H1 (cell line): ENCODE measurements at regions of chr16 and their contacts with region 1.

Region 1: DNA sequence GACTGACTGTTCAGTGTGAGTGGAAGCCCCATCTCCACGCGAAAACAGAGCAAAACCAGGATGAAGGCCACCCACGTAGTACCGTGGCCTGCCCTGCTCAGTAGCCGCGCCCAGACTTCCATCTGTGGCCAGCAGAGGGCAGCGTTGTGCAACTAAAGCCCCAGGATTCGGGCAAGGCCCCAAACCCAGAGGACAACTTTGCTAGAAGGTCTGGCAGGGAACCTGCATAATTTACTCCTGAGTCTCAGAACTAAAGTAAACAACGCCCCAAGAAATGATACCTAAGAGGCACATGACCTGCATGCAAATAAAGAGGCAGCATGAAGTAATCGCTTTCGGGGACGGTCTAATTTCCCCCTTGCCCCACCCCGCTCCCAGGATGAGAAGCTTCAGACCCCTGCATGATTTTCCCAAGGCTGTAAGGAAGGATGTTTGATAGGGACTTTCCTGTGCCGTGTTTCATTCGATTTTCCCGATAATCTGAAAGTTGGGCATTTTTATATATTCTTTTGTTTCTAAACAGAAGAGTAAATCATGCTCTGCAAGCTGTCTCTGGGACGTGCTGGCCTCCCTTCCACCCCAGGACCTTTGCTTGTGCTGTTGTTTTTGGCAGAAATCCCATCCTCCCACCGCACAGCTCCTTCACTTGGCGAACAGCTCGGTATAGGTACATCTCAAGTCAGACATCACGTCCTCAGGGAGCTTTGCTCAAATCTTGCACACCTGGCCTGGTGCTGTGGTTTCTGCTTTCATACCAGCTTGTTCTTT is 18.6 kb downstream of the HSBP1 start:
- DNase-seq: peak in 1 of 2 experiments; percentile 97
- H3K4me3 ChIP-seq: no peak overlapping the region
- H3K27ac ChIP-seq: no peak overlapping the region; the same call in 1 of the 2 replicates
- H3K4me1 ChIP-seq: peaks cover 6 to 11% (median 8%) of the 10 kb centered on the region in 4 experiments
- H3K27me3 ChIP-seq: no peaks in the 10 kb centered on the region
- CTCF ChIP-seq: peak; percentile 90 to 97 (median 97)
- EP300 ChIP-seq: 0 out of 3 replicates have a peak, but pooled peaks of 1 of the 2 experiments have one; percentile 56
- POLR2A ChIP-seq: no peak
- RAD21 ChIP-seq: peak; percentile 99 to 100

Region 2: GRCh38 chr16:83674931-83675535 is 151.3 kb before region 1 on chr16:
- CTCF ChIA-PET with region 1: no interaction called
- POLR2A ChIA-PET with region 1: no interaction called
- DNase-seq: no peak
- H3K4me3 ChIP-seq: no peak overlapping the region
- H3K27ac ChIP-seq: no peak overlapping the region
- H3K4me1 ChIP-seq: no peaks in the 10 kb centered on the region
- H3K27me3 ChIP-seq: no peaks in the 10 kb centered on the region; a peak in 1 of 7 replicates
- CTCF ChIP-seq: no peak
- EP300 ChIP-seq: no peak
- POLR2A ChIP-seq: no peak
- RAD21 ChIP-seq: no peak

Region 3: GRCh38 chr16:83771306-83771942 is 54.9 kb before region 1 on chr16:
- CTCF ChIA-PET with region 1: no interaction called
- POLR2A ChIA-PET with region 1: no interaction called
- DNase-seq: no peak
- H3K4me3 ChIP-seq: no peak overlapping the region
- H3K27ac ChIP-seq: no peak overlapping the region
- H3K4me1 ChIP-seq: peaks cover 2 to 11% (median 6%) of the 10 kb centered on the region in 4 experiments; a peak in 5 of 7 replicates
- H3K27me3 ChIP-seq: no peaks in the 10 kb centered on the region
- CTCF ChIP-seq: no peak
- EP300 ChIP-seq: no peak
- POLR2A ChIP-seq: no peak
- RAD21 ChIP-seq: no peak

Region 4: DNA sequence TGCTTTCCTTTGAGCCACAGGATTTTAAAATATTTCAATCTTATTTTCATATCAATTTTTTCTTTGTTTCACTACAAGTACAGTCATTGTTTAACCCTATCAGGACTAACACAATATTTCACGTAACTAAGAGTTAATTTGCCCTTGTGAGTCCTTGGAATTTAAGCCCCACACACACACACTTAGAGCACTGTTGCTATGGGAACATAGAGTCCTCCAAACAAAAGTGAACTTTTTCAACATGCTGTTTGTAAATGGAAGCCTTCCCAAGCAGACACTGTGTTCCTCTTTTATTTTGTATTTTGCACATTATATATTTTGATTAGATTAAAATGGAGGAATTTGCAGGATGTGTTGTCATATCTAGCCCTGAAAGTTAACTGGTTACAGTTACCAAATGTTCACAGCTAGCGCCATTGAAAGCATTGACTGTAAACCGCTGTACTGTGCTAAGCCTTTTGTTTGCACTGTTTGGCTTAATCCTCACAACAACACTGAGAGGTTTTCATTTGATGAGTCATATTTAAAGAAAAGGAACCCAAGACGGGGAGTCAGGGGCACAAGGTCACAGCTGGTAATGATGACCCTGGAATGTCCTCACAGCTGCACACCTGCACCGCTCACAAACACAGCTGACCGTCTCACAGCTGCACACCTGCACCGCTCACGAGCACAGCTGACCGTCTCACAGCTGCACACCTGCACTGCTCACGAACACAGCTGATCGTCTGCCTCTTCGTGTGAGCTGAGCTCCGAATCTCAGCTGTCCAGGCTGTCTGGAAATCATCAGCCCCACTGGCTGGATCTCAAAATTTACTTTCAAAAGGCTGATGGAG is 12.3 kb before region 1 on chr16:
- CTCF ChIA-PET with region 1: interaction called, 21 read pairs
- POLR2A ChIA-PET with region 1: interaction called, 3 read pairs
- DNase-seq: peak in 1 of 2 experiments; percentile 26
- H3K4me3 ChIP-seq: no peak overlapping the region
- H3K27ac ChIP-seq: peak overlapping the region; percentile 65; the same call in 1 of the 2 replicates
- H3K4me1 ChIP-seq: peaks cover 1 to 19% (median 8%) of the 10 kb centered on the region in 4 experiments; a peak in 6 of 7 replicates
- H3K27me3 ChIP-seq: no peaks in the 10 kb centered on the region
- CTCF ChIP-seq: no peak
- EP300 ChIP-seq: no peak
- POLR2A ChIP-seq: no peak
- RAD21 ChIP-seq: no peak

Region 5: GRCh38 chr16:83842756-83843507 is 16.6 kb after region 1 on chr16:
- CTCF ChIA-PET with region 1: interaction called, 34 read pairs
- POLR2A ChIA-PET with region 1: interaction called, 54 read pairs
- DNase-seq: no peak
- H3K4me3 ChIP-seq: no peak overlapping the region
- H3K27ac ChIP-seq: 0 out of 2 replicates have a peak overlapping the region, but pooled peaks have one; percentile 6
- H3K4me1 ChIP-seq: peaks cover 15 to 30% (median 23%) of the 10 kb centered on the region in 4 experiments
- H3K27me3 ChIP-seq: no peaks in the 10 kb centered on the region
- CTCF ChIP-seq: no peak
- EP300 ChIP-seq: no peak
- POLR2A ChIP-seq: no peak
- RAD21 ChIP-seq: no peak

Region 6: GRCh38 chr16:83863682-83864081 is 37.4 kb after region 1 on chr16:
- CTCF ChIA-PET with region 1: interaction called, 18 read pairs
- POLR2A ChIA-PET with region 1: no interaction called
- DNase-seq: no peak
- H3K4me3 ChIP-seq: no peak overlapping the region
- H3K27ac ChIP-seq: no peak overlapping the region
- H3K4me1 ChIP-seq: peaks cover 0 to 8% (median 3%) of the 10 kb centered on the region in 4 experiments; a peak in 4 of 7 replicates
- H3K27me3 ChIP-seq: no peaks in the 10 kb centered on the region
- CTCF ChIP-seq: no peak
- EP300 ChIP-seq: no peak
- POLR2A ChIP-seq: no peak
- RAD21 ChIP-seq: no peak

Region 7: GRCh38 chr16:83878838-83879237 is 52.5 kb after region 1 on chr16:
- CTCF ChIA-PET with region 1: interaction called, 67 read pairs
- POLR2A ChIA-PET with region 1: no interaction called
- DNase-seq: no peak
- H3K4me3 ChIP-seq: no peak overlapping the region
- H3K27ac ChIP-seq: no peak overlapping the region
- H3K4me1 ChIP-seq: peaks cover 0 to 3% (median 0%) of the 10 kb centered on the region in 4 experiments; a peak in 1 of 7 replicates
- H3K27me3 ChIP-seq: no peaks in the 10 kb centered on the region
- CTCF ChIP-seq: peak in 2 of 3 experiments; percentile 46 to 65; a peak in 2 of 4 replicates
- EP300 ChIP-seq: no peak
- POLR2A ChIP-seq: no peak
- RAD21 ChIP-seq: peak; percentile 89 to 90

Region 8: DNA sequence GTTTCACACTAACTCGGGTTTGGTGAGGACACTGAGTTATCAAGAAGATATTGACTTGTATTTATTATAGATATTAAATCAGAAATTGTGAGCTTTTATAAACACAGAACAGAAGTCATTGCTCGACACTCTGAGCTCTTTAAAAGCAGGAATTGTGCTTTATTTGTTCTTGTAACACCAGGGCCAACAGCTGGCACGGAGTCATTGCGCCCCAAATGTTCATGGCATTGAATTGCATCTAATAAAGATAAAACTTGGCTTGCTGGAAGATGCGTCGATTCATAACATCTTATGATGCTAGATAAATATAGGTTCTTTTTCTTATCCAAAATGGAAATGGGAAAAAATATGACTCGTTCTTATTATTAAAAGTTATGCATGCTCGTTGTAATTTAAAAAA is 60.8 kb after region 1 on chr16:
- CTCF ChIA-PET with region 1: interaction called, 67 read pairs
- POLR2A ChIA-PET with region 1: interaction called, 3 read pairs
- DNase-seq: no peak
- H3K4me3 ChIP-seq: no peak overlapping the region
- H3K27ac ChIP-seq: no peak overlapping the region
- H3K4me1 ChIP-seq: peaks cover 0 to 3% (median 0%) of the 10 kb centered on the region in 4 experiments; a peak in 1 of 7 replicates
- H3K27me3 ChIP-seq: no peaks in the 10 kb centered on the region
- CTCF ChIP-seq: peak; percentile 18 to 50 (median 43)
- EP300 ChIP-seq: no peak
- POLR2A ChIP-seq: no peak
- RAD21 ChIP-seq: peak; percentile 59 to 67

Region 9: DNA sequence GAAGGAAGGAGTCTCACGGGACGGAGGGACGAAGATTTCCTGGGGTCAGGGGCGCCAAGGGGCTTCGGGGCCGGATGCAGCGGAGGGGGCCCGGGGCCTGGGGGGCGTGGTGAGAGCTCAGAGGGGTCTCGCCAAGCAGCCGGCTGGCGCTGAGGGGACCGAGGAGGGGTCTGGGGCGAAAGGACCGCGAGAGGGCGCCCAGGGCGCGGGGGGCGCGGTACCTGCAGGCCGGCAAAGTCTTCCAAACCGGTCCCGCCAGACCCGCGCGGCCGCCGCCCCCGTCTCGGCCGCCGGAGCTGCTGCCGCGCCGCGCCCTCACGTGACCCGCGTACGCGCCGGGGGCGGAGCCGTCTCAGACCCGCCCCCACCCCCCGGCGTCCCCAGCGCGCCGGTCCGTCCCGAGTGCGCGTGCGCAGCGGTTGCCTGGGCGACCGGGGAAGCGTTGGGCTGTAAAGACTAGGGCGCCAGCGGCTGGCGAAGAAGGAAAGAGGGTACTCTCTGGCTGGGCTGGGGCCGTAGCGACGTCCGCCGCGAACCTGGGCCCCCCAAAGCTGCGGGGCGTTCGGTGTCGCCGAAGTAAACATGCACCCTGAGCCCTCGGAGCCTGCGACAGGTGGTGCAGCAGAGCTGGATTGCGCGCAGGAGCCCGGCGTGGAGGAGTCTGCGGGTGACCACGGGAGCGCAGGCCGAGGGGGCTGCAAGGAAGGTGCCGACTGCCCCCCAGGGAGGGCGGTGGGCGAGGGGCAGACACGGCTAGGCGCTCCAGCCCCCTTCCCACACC is 318.7 kb after region 1 on chr16 and contains the starts of genes DNAAF1 and HSDL1:
- CTCF ChIA-PET with region 1: no interaction called
- POLR2A ChIA-PET with region 1: no interaction called
- DNase-seq: peak; percentile 67 to 99
- H3K4me3 ChIP-seq: peak within 1 kb of the TSS; percentile 88 to 97 (median 92)
- H3K27ac ChIP-seq: no peak within 1 kb of the TSS
- H3K4me1 ChIP-seq: peaks cover 0 to 10% (median 2%) of the 10 kb centered on the region in 4 experiments; a peak in 3 of 7 replicates
- H3K27me3 ChIP-seq: peaks cover 0 to 7% (median 3%) of the 10 kb centered on the region in 4 experiments; a peak in 2 of 7 replicates
- CTCF ChIP-seq: peak in 2 of 3 experiments; percentile 19 to 34; a peak in 3 of 4 replicates
- EP300 ChIP-seq: no peak
- POLR2A ChIP-seq: peak in 1 of 2 experiments; percentile 52; a peak in 2 of 3 replicates
- RAD21 ChIP-seq: peak in 1 of 2 experiments; percentile 17; a peak in 2 of 4 replicates
- total RNA-seq, gene DNAAF1: 0.09 and 0.27 TPM in 2 replicates
- total RNA-seq, gene HSDL1: 55.7 and 58.5 TPM in 2 replicates